ENCODE measurements at regions of chr14 and their contacts with region 1.

Region 1: GRCh38 chr14:21039585-21040369 is 2.4 kb upstream of the RNASE7 start:
- DNase-seq: no peak
- ATAC-seq: peak; percentile 73

Region 2: GRCh38 chr14:21014761-21015190 is 25.0 kb before region 1 on chr14:
- intact Hi-C with region 1: loop called (anchors 1 kb)
- DNase-seq: no peak
- ATAC-seq: peak; percentile 80

Region 3: GRCh38 chr14:21024585-21025370 is 15.0 kb before region 1 on chr14 and contains the start of gene NDRG2:
- intact Hi-C with region 1: loop called (anchors 1 kb)
- DNase-seq: peak; percentile 93
- ATAC-seq: peak; percentile 87
- total RNA-seq, gene NDRG2: 321 TPM

Region 4: DNA sequence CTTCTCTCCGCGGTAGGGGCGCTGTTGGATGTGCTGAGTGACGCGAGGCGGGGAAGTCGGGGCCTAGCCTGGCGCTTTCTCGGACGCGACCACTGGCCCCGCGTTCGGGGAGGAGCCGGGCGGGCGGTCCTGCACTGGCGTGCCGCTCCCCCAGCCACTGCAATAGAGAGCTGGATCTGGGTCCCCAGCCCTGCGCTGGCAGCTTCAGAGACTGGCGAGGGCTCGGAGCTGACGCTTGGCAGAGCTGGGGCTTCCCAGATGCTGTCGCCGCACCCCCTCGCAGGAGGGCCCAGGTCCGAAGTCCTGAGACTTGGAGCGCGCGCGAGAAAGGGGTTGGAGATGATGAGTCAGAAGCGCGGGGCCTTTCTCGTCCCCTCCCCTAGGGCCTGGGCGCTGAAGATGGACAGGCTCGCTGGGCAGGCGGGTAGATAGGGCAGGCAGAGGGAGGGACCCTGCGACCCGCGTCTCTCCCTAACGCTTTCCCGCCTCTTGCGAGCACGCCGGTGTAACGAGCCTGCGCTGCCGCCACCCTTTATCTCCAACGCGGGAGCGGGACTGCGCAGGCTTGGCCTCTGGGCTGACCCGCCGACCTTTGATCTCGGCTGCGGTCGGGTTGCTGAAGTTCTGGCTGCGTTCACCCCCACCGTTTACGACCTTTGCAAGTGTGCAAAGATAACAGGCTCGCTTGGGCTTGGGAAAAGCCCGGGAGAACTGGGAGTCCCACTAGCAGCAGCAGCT is 64.1 kb after region 1 on chr14:
- intact Hi-C with region 1: loop called (anchors 2 kb)
- DNase-seq: peak; percentile 97
- ATAC-seq: peak; percentile 96

Region 5: GRCh38 chr14:21428930-21429329 is 389.2 kb after region 1 on chr14:
- intact Hi-C with region 1: no loop called
- DNase-seq: no peak
- ATAC-seq: peak; percentile 73

Measured in Right ventricle myocardium inferior (tissue), 1 donor.